Activated T-helper 1 cell treated with anti-CD3 and anti-CD28 coated beads, Interleukin-12 subunit alpha, Interleukin-12 subunit beta, Interleukin-2, Interleukin-4 antibody, amounts not matched to agents 30 ng/mL and 10 ng/mL and 1 ng/mL, durations not matched to agents 14 hours and 24 hours and 36 hours (primary cell): ENCODE measurements at regions of chr1 and their contacts with region 1.

Region 1: DNA sequence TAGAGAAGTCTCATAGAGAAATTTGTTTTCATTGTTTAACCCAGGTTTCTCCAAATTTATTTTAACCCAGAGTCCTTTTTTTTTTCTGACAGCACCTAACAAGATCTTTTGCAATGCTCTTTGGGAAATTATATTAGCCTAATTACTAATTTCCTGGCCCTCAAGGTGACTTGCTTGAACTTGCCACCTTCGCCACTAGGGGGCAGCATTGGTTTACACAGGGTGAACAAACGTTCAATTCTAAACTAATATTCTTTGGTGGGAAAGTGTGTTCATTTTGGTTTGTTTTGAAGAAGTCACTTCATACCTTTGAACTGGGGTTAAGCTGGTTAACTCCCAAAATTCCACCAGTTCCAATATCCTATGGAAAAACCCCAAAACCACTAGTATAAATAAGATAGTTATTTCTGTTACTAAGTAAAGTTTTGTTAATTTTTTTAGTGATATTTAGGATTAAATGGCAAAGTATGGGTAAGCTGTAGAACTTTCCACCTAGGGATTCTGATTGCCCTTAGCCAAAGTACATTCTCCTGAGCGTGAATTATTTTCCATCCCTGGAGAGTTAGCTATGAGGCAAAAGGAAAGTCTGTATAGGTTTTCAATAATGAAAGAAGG is 13.0 kb downstream of the CCDC190 start:
- DNase-seq: peak; percentile 39
- H3K4me3 Mint-ChIP-seq: no peak overlapping the region
- H3K27ac Mint-ChIP-seq: no peak overlapping the region
- H3K4me1 Mint-ChIP-seq: no peaks in the 10 kb centered on the region
- H3K27me3 Mint-ChIP-seq: peaks cover 10% of the 10 kb centered on the region

Region 2: DNA sequence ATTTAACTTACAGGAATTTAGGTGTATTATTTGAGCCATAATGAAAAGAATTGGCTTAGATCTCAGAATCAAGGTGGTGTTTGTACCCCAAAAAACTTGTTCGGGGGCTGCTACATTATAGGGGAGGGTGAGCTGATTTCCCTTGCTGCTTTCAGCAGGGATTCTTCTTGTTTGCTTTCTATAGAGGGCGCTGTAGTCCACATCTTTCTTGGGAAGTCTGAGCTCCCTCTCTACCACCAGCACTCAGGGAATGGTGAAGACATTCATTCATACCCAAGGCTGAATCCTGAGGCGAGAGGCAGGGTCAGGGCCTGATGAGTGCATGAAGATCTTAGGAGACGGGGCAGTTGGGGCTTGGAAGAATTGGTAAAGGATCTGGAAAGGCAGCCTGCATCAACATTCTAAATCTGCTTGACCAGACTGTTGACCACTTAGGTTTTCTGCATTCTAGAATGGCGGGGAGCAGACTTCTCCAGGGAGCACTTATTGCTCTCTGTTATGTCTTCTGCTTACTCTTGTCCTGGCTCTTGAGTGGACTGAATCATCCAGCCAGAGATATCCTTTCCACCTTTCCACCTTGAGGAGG is 490.2 kb before region 1 on chr1:
- intact Hi-C with region 1: loop called (anchors 5 kb)
- DNase-seq: no peak
- H3K4me3 Mint-ChIP-seq: no peak overlapping the region
- H3K27ac Mint-ChIP-seq: no peak overlapping the region
- H3K4me1 Mint-ChIP-seq: no peaks in the 10 kb centered on the region
- H3K27me3 Mint-ChIP-seq: peaks cover 9% of the 10 kb centered on the region

Region 3: GRCh38 chr1:162835157-162835899 is 12.6 kb before region 1 on chr1:
- intact Hi-C with region 1: loop called (anchors 1 kb)
- DNase-seq: peak; percentile 6
- H3K4me3 Mint-ChIP-seq: peak overlapping the region; percentile 41
- H3K27ac Mint-ChIP-seq: peak overlapping the region; percentile 55
- H3K4me1 Mint-ChIP-seq: peaks cover 19% of the 10 kb centered on the region
- H3K27me3 Mint-ChIP-seq: peaks cover 11% of the 10 kb centered on the region

Region 4: DNA sequence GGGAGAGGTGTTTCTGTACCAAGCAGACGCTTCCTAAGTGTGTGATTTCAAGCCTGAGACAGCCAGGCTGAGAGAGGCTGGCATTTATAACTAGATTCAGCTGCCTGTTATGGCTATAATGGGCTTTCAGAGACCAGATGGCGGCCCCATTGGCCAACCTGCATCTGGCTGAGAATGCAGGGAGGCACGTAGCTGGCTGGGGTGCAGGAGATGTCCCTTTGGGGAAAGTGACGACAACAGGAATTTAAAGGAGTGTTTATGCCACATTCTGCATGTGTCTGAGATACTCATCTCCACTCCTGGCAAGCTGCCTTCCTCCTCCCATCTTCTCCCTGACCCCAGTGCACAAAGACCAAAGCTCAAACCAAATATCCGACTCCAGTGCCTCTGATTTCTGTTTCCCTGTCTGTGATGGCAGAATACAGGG is 34.3 kb after region 1 on chr1:
- intact Hi-C with region 1: no loop called
- DNase-seq: no peak
- H3K4me3 Mint-ChIP-seq: no peak overlapping the region
- H3K27ac Mint-ChIP-seq: no peak overlapping the region
- H3K4me1 Mint-ChIP-seq: no peaks in the 10 kb centered on the region
- H3K27me3 Mint-ChIP-seq: peaks cover 5% of the 10 kb centered on the region

Region 5: GRCh38 chr1:163071405-163072255 is 223.7 kb after region 1 on chr1:
- intact Hi-C with region 1: loop called (anchors 10 kb)
- DNase-seq: peak; percentile 11
- H3K4me3 Mint-ChIP-seq: no peak overlapping the region
- H3K27ac Mint-ChIP-seq: no peak overlapping the region
- H3K4me1 Mint-ChIP-seq: no peaks in the 10 kb centered on the region
- H3K27me3 Mint-ChIP-seq: peaks cover 19% of the 10 kb centered on the region

Region 6: GRCh38 chr1:163174524-163175437 is 326.8 kb after region 1 on chr1:
- intact Hi-C with region 1: loop called (anchors 1 kb)
- DNase-seq: peak; percentile 1
- H3K4me3 Mint-ChIP-seq: no peak overlapping the region
- H3K27ac Mint-ChIP-seq: no peak overlapping the region
- H3K4me1 Mint-ChIP-seq: no peaks in the 10 kb centered on the region
- H3K27me3 Mint-ChIP-seq: peaks cover 4% of the 10 kb centered on the region

Region 7: GRCh38 chr1:164786980-164787833 is 1939.3 kb after region 1 on chr1:
- intact Hi-C with region 1: loop called (anchors 5 kb)
- DNase-seq: peak; percentile 22
- H3K4me3 Mint-ChIP-seq: no peak overlapping the region
- H3K27ac Mint-ChIP-seq: no peak overlapping the region
- H3K4me1 Mint-ChIP-seq: peaks cover 6% of the 10 kb centered on the region
- H3K27me3 Mint-ChIP-seq: peaks cover 4% of the 10 kb centered on the region